Gastrocnemius medialis (tissue), 4 donors: ENCODE measurements at regions of chr7 and their contacts with region 1.

Region 1: GRCh38 chr7:4715410-4715776 is 33.3 kb downstream of the FOXK1 start:
- DNase-seq: peak; percentile 84 to 89
- ATAC-seq: peak; percentile 86 to 96
- H3K4me3 ChIP-seq: peak overlapping the region; percentile 35 to 47 (median 40)
- H3K27ac ChIP-seq: peak overlapping the region; percentile 74 to 85 (median 83)
- H3K4me1 ChIP-seq: peaks cover 41 to 50% of the 10 kb centered on the region in 2 donors
- H3K27me3 ChIP-seq: no peaks in the 10 kb centered on the region
- CTCF ChIP-seq: no peak
- POLR2A ChIP-seq: peak in 1 of 2 donors; percentile 47

Region 2: DNA sequence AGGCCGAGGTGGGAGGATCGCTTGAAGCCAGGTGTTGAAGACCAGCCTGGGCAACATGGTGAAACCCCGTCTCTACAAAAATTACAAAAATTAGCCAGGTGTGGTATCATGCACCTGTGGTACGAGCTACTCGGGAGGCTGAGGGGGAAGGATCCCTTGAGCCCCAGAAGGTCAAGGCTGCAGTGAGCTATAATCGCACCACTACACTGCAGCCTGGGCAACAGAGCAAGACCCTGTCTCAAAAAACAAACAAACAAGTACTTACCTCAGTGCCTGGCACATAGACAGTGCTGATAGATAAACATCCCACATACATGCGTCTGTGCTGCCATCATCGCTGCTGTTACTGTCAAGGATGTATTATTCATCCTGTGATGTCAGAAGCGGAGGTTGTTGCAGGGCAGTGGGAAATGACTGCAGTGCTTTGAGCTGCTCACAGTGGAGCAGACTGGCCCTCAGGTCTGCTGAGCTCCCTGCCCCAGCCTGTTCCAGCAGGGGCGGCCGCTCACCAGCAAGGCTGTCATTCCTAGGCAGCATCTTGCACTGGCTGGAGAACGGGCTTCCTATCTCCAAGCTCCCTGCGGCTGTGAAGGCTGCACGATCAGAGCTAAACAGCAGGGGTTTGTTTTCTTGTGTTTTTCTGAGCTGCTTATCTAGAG is 14.7 kb before region 1 on chr7:
- in situ Hi-C with region 1: no loop called
- intact Hi-C with region 1: loop called (anchors 1 kb)
- DNase-seq: no peak
- ATAC-seq: no peak
- H3K4me3 ChIP-seq: no peak overlapping the region
- H3K27ac ChIP-seq: no peak overlapping the region
- H3K4me1 ChIP-seq: peaks cover 28 to 37% of the 10 kb centered on the region in 2 donors
- H3K27me3 ChIP-seq: no peaks in the 10 kb centered on the region
- CTCF ChIP-seq: no peak
- POLR2A ChIP-seq: no peak

Region 3: GRCh38 chr7:4738711-4739527 is 23.5 kb after region 1 on chr7:
- in situ Hi-C with region 1: no loop called
- intact Hi-C with region 1: loop called (anchors 1 kb)
- DNase-seq: peak in 1 of 2 donors; percentile 57
- ATAC-seq: peak; percentile 15 to 42
- H3K4me3 ChIP-seq: peak overlapping the region; percentile 34 to 56 (median 47)
- H3K27ac ChIP-seq: peak overlapping the region; percentile 83 to 94 (median 92)
- H3K4me1 ChIP-seq: peaks cover 48 to 59% of the 10 kb centered on the region in 2 donors
- H3K27me3 ChIP-seq: no peaks in the 10 kb centered on the region
- CTCF ChIP-seq: no peak
- POLR2A ChIP-seq: peak in 1 of 2 donors; percentile 13